ENCODE measurements at regions of chr21 and their contacts with region 1.

Region 1: DNA sequence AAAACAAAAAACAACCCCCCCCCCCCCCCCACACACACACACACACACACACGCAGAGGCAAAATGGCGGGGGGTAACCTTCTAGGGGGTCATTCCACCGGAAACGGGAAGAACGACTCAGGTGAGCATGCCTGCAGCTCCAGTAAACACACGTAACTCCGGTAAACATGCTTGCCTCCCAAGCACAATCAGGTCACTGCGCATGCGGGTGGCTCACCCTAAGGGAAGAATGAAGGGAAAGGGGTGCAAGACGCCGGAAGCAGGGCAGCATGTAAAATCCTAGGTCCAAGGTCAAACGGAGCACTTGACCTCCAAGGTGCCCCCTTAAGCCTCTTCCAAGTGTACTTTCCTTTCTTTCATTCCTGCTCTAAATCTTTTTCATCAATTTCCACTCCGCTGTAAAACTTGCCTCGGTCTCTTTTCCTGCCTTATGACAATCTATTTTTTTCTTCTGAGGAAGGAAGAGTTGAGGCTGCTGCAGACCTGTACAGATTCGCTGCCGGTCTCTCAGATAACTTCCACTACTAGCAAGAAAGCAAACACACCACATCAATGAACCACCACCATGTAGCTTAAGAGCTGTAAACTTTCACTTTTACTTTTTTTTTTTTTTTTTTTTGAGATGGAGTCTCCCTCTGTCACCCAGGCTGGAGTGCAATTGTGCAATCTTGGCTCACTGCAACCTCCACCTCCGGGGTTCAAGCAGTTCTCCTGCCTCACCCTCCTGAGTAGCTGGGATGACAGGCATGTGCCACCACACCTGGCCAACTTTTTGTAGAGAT is 21.0 kb upstream of the CBR3 start:
- DNase-seq: no peak
- H3K4me3 ChIP-seq: no peak overlapping the region
- H3K27ac ChIP-seq: no peak overlapping the region
- H3K4me1 ChIP-seq: no peaks in the 10 kb centered on the region
- H3K27me3 ChIP-seq: no peaks in the 10 kb centered on the region
- CTCF ChIP-seq: no peak

Region 2: DNA sequence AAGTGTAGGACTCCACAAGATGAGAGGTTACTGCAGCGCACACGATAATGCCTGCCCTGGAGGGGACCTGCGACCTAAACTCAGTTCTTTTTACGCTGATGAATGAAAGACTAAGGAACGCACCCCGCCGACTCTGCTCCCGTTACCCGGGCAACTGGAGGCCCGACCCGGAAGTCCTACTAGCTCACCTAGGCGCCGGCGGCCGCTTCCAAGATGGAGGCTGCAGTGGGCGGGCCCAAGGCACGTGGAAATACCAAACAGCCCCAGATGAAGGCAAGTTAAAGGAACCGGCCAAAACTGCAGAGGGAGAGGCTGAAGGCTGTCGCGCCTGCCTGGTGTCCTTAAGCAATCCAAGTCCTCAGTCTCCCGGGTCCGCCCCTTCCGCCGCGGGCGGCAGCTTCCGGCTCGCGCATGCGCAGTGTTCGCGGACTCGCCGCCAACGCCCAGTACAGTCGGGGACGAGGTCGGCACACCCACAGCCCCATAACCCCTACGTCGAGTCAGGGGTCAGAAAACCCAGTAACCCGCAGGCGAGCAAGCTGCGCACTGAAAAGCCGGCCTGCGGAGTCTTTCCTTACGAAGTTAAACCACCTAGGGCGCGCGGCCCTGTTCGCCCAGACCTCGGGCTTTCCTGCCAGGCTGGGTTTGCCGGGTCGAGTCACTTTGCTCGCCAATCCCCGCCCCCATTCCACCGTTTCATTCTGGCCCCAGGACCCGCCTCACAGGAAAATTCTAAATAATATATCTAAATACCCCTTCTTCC is 53.5 kb before region 1 on chr21 and contains the start of gene SETD4:
- intact Hi-C with region 1: loop called (anchors 2 kb)
- DNase-seq: peak; percentile 63 to 95
- H3K4me3 ChIP-seq: peak within 1 kb of the TSS; percentile 80 to 81
- H3K27ac ChIP-seq: peak within 1 kb of the TSS; percentile 91 to 93
- H3K4me1 ChIP-seq: peaks cover 0 to 11% of the 10 kb centered on the region in 2 donors
- H3K27me3 ChIP-seq: no peaks in the 10 kb centered on the region
- CTCF ChIP-seq: no peak
- total RNA-seq, gene SETD4: 35.9 TPM

Region 3: GRCh38 chr21:36076878-36077655 is 36.8 kb before region 1 on chr21:
- intact Hi-C with region 1: no loop called
- DNase-seq: no peak
- H3K4me3 ChIP-seq: no peak overlapping the region
- H3K27ac ChIP-seq: no peak overlapping the region
- H3K4me1 ChIP-seq: no peaks in the 10 kb centered on the region
- H3K27me3 ChIP-seq: no peaks in the 10 kb centered on the region
- CTCF ChIP-seq: no peak